B cell (primary cell): ENCODE measurements at regions of chr3 and their contacts with region 1.

Region 1: GRCh38 chr3:124639406-124640237 is 90.6 kb upstream of the UMPS start:
- DNase-seq: peak; percentile 18
- ATAC-seq: peak; percentile 49
- H3K4me3 ChIP-seq: peak overlapping the region in 2 of 5 experiments; percentile 18 to 50
- H3K4me3 Mint-ChIP-seq: peak overlapping the region; percentile 75
- H3K27ac ChIP-seq: peak overlapping the region; percentile 45 to 71
- H3K27ac Mint-ChIP-seq: peak overlapping the region; percentile 8
- H3K4me1 ChIP-seq: peaks cover 20 to 29% of the 10 kb centered on the region in 2 donors
- H3K4me1 Mint-ChIP-seq: peaks cover 41% of the 10 kb centered on the region
- H3K27me3 ChIP-seq: no peaks in the 10 kb centered on the region
- H3K27me3 Mint-ChIP-seq: no peaks in the 10 kb centered on the region
- CTCF ChIP-seq: no peak

Region 2: GRCh38 chr3:124075753-124076152 is 563.9 kb before region 1 on chr3:
- CTCF ChIA-PET with region 1: no interaction called
- POLR2A ChIA-PET with region 1: no interaction called
- intact Hi-C with region 1: no loop called
- DNase-seq: no peak
- ATAC-seq: no peak
- H3K4me3 ChIP-seq: no peak overlapping the region
- H3K4me3 Mint-ChIP-seq: no peak overlapping the region
- H3K27ac ChIP-seq: no peak overlapping the region
- H3K27ac Mint-ChIP-seq: no peak overlapping the region
- H3K4me1 ChIP-seq: no peaks in the 10 kb centered on the region
- H3K4me1 Mint-ChIP-seq: no peaks in the 10 kb centered on the region
- H3K27me3 ChIP-seq: peaks cover 0 to 3% (median 0%) of the 10 kb centered on the region in 4 experiments
- H3K27me3 Mint-ChIP-seq: peaks cover 39% of the 10 kb centered on the region
- CTCF ChIP-seq: no peak

Region 3: DNA sequence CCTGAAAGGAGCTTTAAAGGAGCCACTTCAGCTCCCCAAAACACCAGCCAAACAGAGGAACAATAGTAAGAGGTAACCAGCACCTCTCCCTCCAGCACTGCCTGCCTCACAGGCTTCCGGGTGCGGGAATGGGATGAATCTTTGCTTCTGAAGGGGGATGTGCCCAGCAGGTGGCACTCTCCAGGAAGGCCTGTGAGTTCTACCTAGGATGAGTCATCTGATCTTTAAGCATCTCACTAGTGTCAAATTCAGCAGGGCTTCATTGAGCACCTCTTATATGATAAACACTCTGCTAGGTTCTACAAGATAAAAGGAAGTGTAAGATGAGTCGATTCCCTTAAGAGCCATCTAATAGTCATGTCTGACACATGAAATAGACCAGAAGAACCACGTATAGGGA is 146.8 kb before region 1 on chr3:
- CTCF ChIA-PET with region 1: no interaction called
- POLR2A ChIA-PET with region 1: no interaction called
- intact Hi-C with region 1: no loop called
- DNase-seq: no peak
- ATAC-seq: no peak
- H3K4me3 ChIP-seq: no peak overlapping the region
- H3K4me3 Mint-ChIP-seq: no peak overlapping the region
- H3K27ac ChIP-seq: no peak overlapping the region
- H3K27ac Mint-ChIP-seq: no peak overlapping the region
- H3K4me1 ChIP-seq: no peaks in the 10 kb centered on the region
- H3K4me1 Mint-ChIP-seq: peaks cover 2% of the 10 kb centered on the region
- H3K27me3 ChIP-seq: no peaks in the 10 kb centered on the region
- H3K27me3 Mint-ChIP-seq: peaks cover 22% of the 10 kb centered on the region
- CTCF ChIP-seq: no peak

Region 4: DNA sequence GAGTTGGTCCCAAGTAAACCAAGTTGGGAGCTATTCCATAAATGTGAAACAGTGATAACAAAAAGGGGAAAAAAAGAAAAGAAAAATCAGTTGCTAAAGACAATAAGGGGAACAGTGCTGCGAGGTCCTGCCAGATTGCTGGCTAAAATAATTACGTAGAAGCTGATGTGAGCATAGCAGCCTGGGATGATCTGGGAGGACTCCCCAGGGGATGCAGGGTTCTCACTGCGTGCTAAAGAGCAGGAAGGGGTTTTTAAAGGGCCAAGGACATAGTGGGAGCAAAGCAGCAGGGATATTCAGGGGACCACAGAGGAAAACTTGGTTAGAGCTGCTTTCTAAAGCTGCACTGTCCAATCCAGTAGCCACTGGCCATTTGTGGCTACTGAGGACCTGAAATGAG is 42.3 kb before region 1 on chr3:
- CTCF ChIA-PET with region 1: no interaction called
- POLR2A ChIA-PET with region 1: interaction called, 15 read pairs
- intact Hi-C with region 1: no loop called
- DNase-seq: no peak
- ATAC-seq: no peak
- H3K4me3 ChIP-seq: no peak overlapping the region
- H3K4me3 Mint-ChIP-seq: no peak overlapping the region
- H3K27ac ChIP-seq: no peak overlapping the region
- H3K27ac Mint-ChIP-seq: no peak overlapping the region
- H3K4me1 ChIP-seq: no peaks in the 10 kb centered on the region
- H3K4me1 Mint-ChIP-seq: no peaks in the 10 kb centered on the region
- H3K27me3 ChIP-seq: peaks cover 0 to 3% (median 0%) of the 10 kb centered on the region in 4 experiments
- H3K27me3 Mint-ChIP-seq: peaks cover 7% of the 10 kb centered on the region
- CTCF ChIP-seq: no peak

Region 5: DNA sequence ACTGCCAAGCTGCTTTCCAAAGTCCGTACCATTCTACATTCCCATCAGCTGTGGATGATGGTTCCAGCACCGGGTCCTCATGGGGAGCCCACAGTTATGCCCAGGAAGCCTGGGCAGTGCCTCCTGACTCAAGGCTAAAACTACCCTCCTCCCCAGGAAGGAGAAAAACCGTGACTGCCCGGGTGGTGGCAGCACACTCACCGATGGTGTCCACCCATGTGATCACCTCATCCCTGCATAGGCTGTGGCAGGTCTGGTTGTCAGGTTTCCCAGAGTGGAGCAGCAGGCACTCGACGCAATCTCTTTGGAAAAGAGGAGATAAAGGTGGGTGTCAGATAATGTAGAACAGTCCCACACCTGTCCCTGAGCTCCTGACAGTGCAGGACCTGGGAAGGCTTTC is 129.2 kb after region 1 on chr3:
- CTCF ChIA-PET with region 1: no interaction called
- POLR2A ChIA-PET with region 1: no interaction called
- intact Hi-C with region 1: no loop called
- DNase-seq: no peak
- ATAC-seq: no peak
- H3K4me3 ChIP-seq: no peak overlapping the region
- H3K4me3 Mint-ChIP-seq: no peak overlapping the region
- H3K27ac ChIP-seq: no peak overlapping the region
- H3K27ac Mint-ChIP-seq: no peak overlapping the region
- H3K4me1 ChIP-seq: no peaks in the 10 kb centered on the region
- H3K4me1 Mint-ChIP-seq: no peaks in the 10 kb centered on the region
- H3K27me3 ChIP-seq: peaks cover 0 to 9% (median 4%) of the 10 kb centered on the region in 4 experiments
- H3K27me3 Mint-ChIP-seq: peaks cover 34% of the 10 kb centered on the region
- CTCF ChIP-seq: no peak